ENCODE measurements at regions of chr9 and their contacts with region 1.

Region 1: DNA sequence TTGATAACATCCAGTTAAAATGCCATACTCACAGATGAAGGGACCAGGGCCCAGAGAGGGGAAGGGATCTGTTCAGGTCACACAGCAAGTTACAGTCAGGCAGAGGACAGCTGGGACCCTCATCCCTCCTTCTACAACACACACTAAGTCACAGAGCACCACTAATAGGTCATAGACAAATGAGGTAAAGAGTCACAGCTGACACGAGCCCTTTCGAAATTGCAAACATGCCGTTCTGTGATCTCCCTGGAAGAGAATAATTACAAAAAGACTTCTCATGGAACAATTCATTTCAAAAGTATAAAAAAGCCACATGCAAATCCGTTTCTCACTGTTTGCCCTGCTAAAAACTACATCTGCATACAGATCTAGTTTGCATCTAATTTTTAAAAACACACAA is 15.5 kb downstream of the IGFBPL1 start:
- DNase-seq: no peak
- H3K4me3 ChIP-seq: no peak overlapping the region
- H3K27ac ChIP-seq: no peak overlapping the region
- H3K4me1 ChIP-seq: no peaks in the 10 kb centered on the region
- H3K27me3 ChIP-seq: peaks cover 12% of the 10 kb centered on the region
- CTCF ChIP-seq: no peak

Region 2: GRCh38 chr9:38068866-38069629 is 339.7 kb before region 1 on chr9 and contains the start of gene SHB:
- CTCF ChIA-PET with region 1: no interaction called
- POLR2A ChIA-PET with region 1: no interaction called
- intact Hi-C with region 1: no loop called
- DNase-seq: peak; percentile 87
- H3K4me3 ChIP-seq: peak within 1 kb of the TSS; percentile 89
- H3K27ac ChIP-seq: peak within 1 kb of the TSS; percentile 91
- H3K4me1 ChIP-seq: peaks cover 20% of the 10 kb centered on the region
- H3K27me3 ChIP-seq: no peaks in the 10 kb centered on the region
- CTCF ChIP-seq: peak; percentile 50; the same call in 1 of the 2 replicates
- total RNA-seq, gene SHB: 14.7 and 20.7 TPM in 2 replicates

Region 3: DNA sequence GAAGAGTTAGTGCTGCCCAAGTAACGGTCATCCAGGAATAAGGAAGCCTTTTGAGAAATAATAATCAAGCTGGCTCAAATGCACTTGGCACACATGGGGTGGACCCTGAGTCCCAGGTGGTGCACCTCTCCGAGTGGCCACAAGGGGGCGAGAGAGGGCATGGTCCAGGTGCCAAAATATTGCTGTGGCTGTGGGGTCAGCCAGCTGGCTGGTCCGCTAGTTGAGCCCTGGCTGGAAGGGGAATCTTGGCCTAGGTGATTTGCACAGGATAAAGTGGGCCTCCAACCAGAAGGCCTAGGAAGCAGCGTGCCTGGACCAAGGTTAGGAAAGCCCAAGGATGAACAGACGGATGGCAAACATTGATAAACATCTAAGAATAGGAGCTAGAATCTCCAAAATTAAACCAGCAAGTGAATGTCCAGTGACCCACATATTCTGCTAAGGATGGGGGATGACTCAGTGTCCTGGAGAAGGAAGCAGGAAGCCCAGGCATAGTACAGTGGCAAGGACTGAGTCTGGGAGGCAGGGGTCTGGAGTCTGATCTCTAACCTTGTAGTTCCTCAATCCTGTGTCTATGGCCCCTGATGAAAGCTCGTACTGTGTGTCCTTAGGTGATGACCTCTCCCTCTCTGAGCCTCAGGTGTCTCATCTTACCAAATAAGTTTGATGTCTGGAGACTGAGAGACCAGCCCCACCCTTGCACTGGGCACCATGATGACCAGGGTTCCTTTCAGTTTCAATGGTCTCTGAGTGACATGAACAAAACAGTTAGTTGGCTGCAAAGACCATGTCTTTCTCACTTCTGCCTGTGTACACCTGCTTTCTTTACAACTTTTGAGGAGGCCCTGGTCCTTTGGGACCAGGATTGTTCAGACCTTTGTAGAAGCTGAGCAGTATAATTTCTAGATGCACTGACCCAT is 320.5 kb before region 1 on chr9:
- CTCF ChIA-PET with region 1: no interaction called
- POLR2A ChIA-PET with region 1: no interaction called
- intact Hi-C with region 1: loop called (anchors 10 kb)
- DNase-seq: peak; percentile 50
- H3K4me3 ChIP-seq: no peak overlapping the region
- H3K27ac ChIP-seq: no peak overlapping the region
- H3K4me1 ChIP-seq: no peaks in the 10 kb centered on the region
- H3K27me3 ChIP-seq: no peaks in the 10 kb centered on the region
- CTCF ChIP-seq: peak; percentile 99

Region 4: GRCh38 chr9:38183994-38184568 is 224.6 kb before region 1 on chr9:
- CTCF ChIA-PET with region 1: no interaction called
- POLR2A ChIA-PET with region 1: interaction called, 14 read pairs
- intact Hi-C with region 1: no loop called
- DNase-seq: peak; percentile 77
- H3K4me3 ChIP-seq: no peak overlapping the region
- H3K27ac ChIP-seq: no peak overlapping the region
- H3K4me1 ChIP-seq: peaks cover 15% of the 10 kb centered on the region
- H3K27me3 ChIP-seq: no peaks in the 10 kb centered on the region
- CTCF ChIP-seq: no peak